ENCODE measurements at regions of chr14 and their contacts with region 1.

Region 1: DNA sequence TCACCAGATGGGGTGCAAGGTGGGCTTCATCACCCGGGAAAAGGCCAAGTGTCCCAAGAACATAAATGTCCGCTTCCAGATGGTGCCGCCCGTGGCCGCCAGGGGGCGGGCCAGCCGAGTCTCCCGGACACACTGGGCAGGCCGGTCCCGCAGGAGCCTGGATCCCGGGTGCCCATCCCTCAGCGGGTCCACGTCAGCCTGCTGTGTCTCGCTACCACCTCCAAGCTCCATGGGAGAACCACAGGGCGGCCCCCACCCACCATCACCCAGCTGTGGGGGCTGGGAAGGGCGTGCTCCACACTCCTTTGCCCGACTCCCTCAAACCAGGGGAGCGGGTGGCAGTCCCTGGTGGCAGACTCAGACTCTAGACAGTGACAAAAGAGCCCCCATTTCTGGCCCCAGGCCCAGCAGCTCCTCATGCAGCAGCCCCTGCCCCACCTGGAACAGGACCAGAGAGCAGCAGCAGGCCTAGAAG is 22.0 kb upstream of the NUDT14 start:
- DNase-seq: peak; percentile 76
- H3K4me3 ChIP-seq: no peak overlapping the region
- H3K27ac ChIP-seq: no peak overlapping the region
- H3K4me1 ChIP-seq: peaks cover 5% of the 10 kb centered on the region
- H3K27me3 ChIP-seq: peaks cover 18% of the 10 kb centered on the region
- CTCF ChIP-seq: peak; percentile 92

Region 2: GRCh38 chr14:105267820-105268548 is 64.9 kb after region 1 on chr14:
- intact Hi-C with region 1: loop called (anchors 5 kb)
- DNase-seq: no peak
- H3K4me3 ChIP-seq: no peak overlapping the region
- H3K27ac ChIP-seq: no peak overlapping the region
- H3K4me1 ChIP-seq: no peaks in the 10 kb centered on the region
- H3K27me3 ChIP-seq: no peaks in the 10 kb centered on the region
- CTCF ChIP-seq: peak; percentile 26

Region 3: DNA sequence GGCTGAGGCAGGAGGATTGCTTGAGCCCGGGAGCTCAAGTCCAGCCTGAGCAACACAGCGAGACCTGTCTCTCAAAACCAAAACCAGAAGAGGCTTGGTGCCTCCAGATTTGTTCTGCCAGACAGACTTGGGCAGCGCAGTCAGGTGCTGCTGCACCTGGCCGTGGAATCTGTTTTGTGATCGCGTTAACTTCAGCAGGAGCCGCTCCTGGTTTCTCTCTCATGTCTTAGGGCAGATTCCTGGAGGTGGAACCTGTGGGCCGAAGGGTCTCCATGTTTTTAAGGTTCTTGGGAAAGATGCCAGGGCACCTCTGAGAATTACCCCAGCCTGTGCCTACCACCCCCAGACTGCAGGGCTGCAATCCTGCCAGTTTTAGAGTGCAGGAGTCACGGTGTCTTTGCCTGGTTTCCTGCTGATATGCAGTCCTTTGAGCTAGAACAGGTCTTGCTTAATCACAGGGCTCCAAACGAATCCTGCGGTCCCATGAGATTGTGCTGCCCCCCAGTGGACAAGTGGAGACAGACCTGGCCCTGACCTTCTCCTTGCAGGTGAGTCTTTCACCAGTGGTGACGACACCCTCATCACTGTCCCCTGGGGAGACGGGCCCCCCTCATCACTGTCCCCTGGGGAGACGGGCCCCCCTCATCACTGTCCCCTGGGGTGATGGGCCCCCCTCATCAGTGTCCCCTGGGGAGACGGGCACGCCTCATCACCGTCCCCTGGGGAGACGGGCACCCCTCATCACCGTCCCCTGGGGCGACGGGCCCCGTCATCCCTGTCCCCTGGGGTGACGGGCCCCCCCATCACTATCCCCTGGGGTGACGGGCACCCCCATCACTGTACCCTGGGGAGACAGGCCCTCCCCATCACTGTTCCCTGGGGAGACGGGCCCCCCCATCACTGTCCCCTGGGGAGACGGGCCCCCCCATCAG is 149.1 kb after region 1 on chr14:
- intact Hi-C with region 1: loop called (anchors 2 kb)
- DNase-seq: peak; percentile 90
- H3K4me3 ChIP-seq: no peak overlapping the region
- H3K27ac ChIP-seq: no peak overlapping the region
- H3K4me1 ChIP-seq: no peaks in the 10 kb centered on the region
- H3K27me3 ChIP-seq: no peaks in the 10 kb centered on the region
- CTCF ChIP-seq: peak; percentile 71

Region 4: DNA sequence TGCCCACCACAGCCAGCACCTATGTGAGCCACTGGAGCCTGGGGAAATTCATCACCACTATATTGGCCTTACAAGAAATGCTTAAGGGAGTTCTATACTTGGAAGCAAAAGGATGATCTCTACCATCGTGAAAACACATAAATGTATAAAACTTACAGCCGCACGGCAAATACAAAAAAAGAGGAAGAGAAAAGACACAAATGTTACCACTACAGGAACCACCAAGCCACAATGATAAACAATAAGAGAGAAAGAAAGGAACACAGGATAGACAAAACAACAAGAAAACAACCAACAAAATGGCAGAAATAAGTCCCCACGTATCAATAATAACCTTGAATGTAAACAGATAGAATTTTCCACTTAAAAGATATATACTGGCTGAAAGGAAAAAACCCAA is 590.7 kb after region 1 on chr14:
- intact Hi-C with region 1: no loop called
- DNase-seq: no peak
- H3K4me3 ChIP-seq: no peak overlapping the region
- H3K27ac ChIP-seq: no peak overlapping the region
- H3K4me1 ChIP-seq: no peaks in the 10 kb centered on the region
- H3K27me3 ChIP-seq: no peaks in the 10 kb centered on the region
- CTCF ChIP-seq: no peak

Measured in colonic mucosa (tissue), 4 donors.